ENCODE measurements at regions of chr1 and their contacts with region 1.

Region 1: DNA sequence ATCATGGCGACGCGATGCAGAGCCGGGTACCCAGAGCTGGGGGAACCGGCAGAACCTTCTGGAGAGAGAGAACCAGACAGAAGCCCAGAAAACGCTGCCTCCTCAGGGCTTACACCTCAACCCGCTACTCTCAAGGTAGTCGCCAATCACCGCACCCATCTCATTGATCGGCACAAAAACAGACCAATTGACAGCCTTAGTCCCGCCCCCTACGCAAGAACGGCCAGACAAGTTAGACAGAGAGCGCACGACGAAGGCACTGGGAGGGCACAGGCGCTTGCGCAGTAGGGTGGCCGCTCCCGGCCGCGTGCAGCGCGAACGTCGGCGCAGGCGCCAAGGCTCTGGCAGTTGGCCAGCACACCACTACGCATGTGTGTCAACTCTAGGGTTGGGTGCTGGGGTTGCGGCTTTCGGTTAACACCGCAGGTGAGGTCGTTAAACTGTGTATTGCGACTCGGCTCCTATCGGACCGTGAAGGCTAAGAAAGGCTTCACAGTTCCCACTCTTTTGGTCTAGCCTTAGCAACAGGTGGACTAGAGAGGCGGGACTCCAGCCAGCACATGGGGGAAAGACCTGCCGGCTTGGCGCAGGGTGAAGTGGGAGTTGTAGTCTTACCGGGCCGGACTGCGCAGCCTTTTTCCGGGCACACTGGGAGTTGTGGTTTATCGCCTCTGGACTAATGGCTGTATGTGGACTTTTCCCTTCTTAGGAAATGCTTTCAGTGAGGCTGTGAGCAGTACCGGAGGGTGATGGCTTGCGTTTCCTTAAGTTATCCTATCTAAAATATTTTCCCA is at the starts of genes CCT3 and TSACC:
- DNase-seq: peak; percentile 99
- H3K4me3 ChIP-seq: peak within 1 kb of the TSS; percentile 53 to 94 (median 84)
- H3K4me3 Mint-ChIP-seq: peak within 1 kb of the TSS; percentile 98
- H3K27ac ChIP-seq: peak within 1 kb of the TSS; percentile 57 to 66
- H3K27ac Mint-ChIP-seq: peak within 1 kb of the TSS; percentile 91 to 98 (median 96)
- H3K4me1 ChIP-seq: peaks cover 18 to 20% of the 10 kb centered on the region in 2 donors
- H3K4me1 Mint-ChIP-seq: peaks cover 18% of the 10 kb centered on the region
- H3K27me3 ChIP-seq: no peaks in the 10 kb centered on the region
- H3K27me3 Mint-ChIP-seq: peaks cover 0 to 2% (median 0%) of the 10 kb centered on the region in 3 donors
- CTCF ChIP-seq: no peak
- polyA plus RNA-seq, gene CCT3: 65.3 to 97.3 (median 94.8) TPM
- polyA plus RNA-seq, gene TSACC: 0.67 TPM in 1 of 3 donors, not detected in the others

Region 2: GRCh38 chr1:156276966-156277381 is 61.4 kb before region 1 on chr1:
- intact Hi-C with region 1: loop called in 1 of 2 experiments (anchors 10 kb)
- DNase-seq: peak; percentile 23 to 62 (median 34)
- H3K4me3 ChIP-seq: peak overlapping the region in 2 of 3 experiments; percentile 8 to 65
- H3K4me3 Mint-ChIP-seq: peak overlapping the region; percentile 56 to 76
- H3K27ac ChIP-seq: peak overlapping the region; percentile 80 to 89
- H3K27ac Mint-ChIP-seq: peak overlapping the region; percentile 85 to 95 (median 88)
- H3K4me1 ChIP-seq: peaks cover 65 to 67% of the 10 kb centered on the region in 2 donors
- H3K4me1 Mint-ChIP-seq: peaks cover 54% of the 10 kb centered on the region
- H3K27me3 ChIP-seq: no peaks in the 10 kb centered on the region
- H3K27me3 Mint-ChIP-seq: no peaks in the 10 kb centered on the region
- CTCF ChIP-seq: no peak